Endothelial cell of umbilical vein (primary cell): ENCODE measurements at regions of chr1 and their contacts with region 1.

Region 1: GRCh38 chr1:246959944-246960693 is 28.4 kb upstream of the AHCTF1 start:
- DNase-seq: peak; percentile 75
- H3K4me3 ChIP-seq: peak overlapping the region in 1 of 3 experiments; percentile 18
- H3K27ac ChIP-seq: peak overlapping the region; percentile 52
- H3K4me1 ChIP-seq: peaks cover 7% of the 10 kb centered on the region
- H3K27me3 ChIP-seq: no peaks in the 10 kb centered on the region
- CTCF ChIP-seq: no peak
- POLR2A ChIP-seq: no peak

Region 2: DNA sequence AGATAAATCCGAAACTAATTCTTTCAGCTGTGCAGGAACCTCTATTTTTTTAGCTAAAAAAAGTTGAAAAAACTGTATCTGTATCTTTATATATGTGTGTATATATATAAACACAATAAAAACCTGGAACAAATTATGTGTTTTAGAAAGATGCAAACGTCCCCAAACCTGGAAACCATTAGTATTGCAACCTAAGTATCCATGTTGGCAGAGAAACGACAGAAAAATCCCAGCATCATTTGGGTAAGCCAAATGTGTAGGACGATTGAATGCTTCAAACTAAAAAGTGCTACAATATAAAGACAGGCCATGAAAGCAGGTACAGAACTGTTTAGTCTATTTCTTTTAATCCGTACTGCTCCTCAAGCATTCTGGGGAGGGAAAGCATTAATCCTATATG is 116.2 kb before region 1 on chr1:
- CTCF ChIA-PET with region 1: no interaction called
- POLR2A ChIA-PET with region 1: no interaction called
- dilution Hi-C with region 1: no loop called
- intact Hi-C with region 1: no loop called
- DNase-seq: no peak
- H3K4me3 ChIP-seq: no peak overlapping the region
- H3K27ac ChIP-seq: no peak overlapping the region
- H3K4me1 ChIP-seq: no peaks in the 10 kb centered on the region
- H3K27me3 ChIP-seq: no peaks in the 10 kb centered on the region
- CTCF ChIP-seq: no peak
- POLR2A ChIP-seq: no peak

Region 3: DNA sequence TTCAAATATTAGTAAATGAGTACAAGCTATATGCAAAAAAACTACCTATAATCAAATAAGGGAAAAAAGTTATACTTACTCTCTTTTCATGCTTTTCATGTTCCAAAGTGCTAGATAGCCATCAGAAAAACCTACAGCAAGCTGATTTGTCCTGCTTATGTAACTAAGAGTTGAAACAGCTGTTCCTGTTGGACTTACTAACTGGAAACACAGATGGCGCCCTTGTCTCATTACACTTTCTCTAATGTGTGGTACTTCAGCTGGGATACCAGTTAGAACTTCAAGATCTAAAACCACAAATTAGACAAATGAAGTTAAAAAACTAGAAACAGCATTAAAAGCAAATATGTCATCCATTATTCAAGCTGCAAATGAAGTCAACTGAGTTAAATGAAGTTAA is 52.6 kb before region 1 on chr1:
- CTCF ChIA-PET with region 1: interaction called, 13 read pairs
- POLR2A ChIA-PET with region 1: no interaction called
- dilution Hi-C with region 1: no loop called
- intact Hi-C with region 1: loop called (anchors 1 kb)
- DNase-seq: peak; percentile 63
- H3K4me3 ChIP-seq: no peak overlapping the region
- H3K27ac ChIP-seq: no peak overlapping the region
- H3K4me1 ChIP-seq: no peaks in the 10 kb centered on the region
- H3K27me3 ChIP-seq: no peaks in the 10 kb centered on the region
- CTCF ChIP-seq: peak; percentile 15 to 33
- POLR2A ChIP-seq: no peak

Region 4: GRCh38 chr1:246947255-246947654 is 12.9 kb before region 1 on chr1:
- CTCF ChIA-PET with region 1: interaction called, 4 read pairs
- POLR2A ChIA-PET with region 1: no interaction called
- dilution Hi-C with region 1: no loop called
- intact Hi-C with region 1: loop called (anchors 1 kb)
- DNase-seq: peak; percentile 87
- H3K4me3 ChIP-seq: no peak overlapping the region
- H3K27ac ChIP-seq: peak overlapping the region; percentile 58
- H3K4me1 ChIP-seq: peaks cover 6% of the 10 kb centered on the region
- H3K27me3 ChIP-seq: no peaks in the 10 kb centered on the region
- CTCF ChIP-seq: no peak
- POLR2A ChIP-seq: no peak

Region 5: GRCh38 chr1:247054992-247055415 is 94.9 kb after region 1 on chr1:
- CTCF ChIA-PET with region 1: no interaction called
- POLR2A ChIA-PET with region 1: no interaction called
- dilution Hi-C with region 1: no loop called
- intact Hi-C with region 1: no loop called
- DNase-seq: peak; percentile 71
- H3K4me3 ChIP-seq: no peak overlapping the region
- H3K27ac ChIP-seq: no peak overlapping the region
- H3K4me1 ChIP-seq: peaks cover 6% of the 10 kb centered on the region
- H3K27me3 ChIP-seq: no peaks in the 10 kb centered on the region
- CTCF ChIP-seq: no peak
- POLR2A ChIP-seq: no peak